Gastrocnemius medialis (tissue), 4 donors: ENCODE measurements at regions of chr16 and their contacts with region 1.

Region 1: DNA sequence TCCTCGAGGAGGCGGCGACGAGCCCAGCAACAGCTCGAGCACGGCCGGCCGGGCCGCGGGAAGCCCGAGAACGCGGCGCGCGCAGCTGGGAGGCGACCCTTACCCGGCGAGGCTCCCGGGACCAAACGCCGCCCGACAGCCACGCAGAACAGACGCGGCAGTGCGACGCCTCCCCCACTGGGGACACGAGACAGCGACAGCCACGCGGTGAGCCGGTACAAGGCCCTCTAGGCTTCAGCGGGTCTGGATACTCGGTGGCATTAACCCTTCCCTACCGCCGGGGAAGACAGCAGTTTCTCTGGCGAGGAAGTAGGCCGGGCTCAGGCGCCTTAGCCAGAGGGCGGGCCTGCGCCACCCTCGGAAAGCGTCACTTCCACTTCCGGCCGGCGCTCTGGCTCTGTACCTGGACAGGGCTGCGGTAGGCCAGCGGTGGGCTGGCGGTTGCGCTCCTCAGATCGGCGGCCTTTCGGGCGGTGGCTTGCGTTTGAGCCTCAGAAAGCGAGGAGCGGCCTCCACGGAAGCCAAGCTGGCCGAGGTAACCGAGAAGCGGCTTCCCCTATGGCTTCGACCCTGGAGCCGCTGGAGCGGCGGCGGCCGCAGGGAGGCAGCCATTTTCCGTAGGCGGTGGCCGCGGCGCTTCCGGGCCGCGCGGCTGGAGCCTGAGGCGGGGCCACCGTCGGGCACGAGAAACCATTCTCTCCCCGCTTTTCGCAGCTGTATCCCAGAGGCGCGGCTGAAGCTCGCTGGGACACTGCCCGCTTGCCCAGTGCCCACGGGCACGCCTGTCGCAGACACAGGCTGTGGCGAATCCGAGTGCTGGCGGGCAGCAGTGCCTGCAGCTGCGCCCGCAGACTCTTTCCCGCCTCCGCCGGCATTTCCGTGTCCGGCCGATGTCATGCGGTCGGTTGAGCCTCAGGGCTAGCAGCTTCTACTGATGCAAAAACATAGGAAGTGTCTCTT is at the starts of genes TIGD7 and ZNF75A:
- DNase-seq: peak; percentile 78
- ATAC-seq: peak; percentile 97 to 98
- H3K4me3 ChIP-seq: peak within 1 kb of the TSS; percentile 75 to 83 (median 76)
- H3K27ac ChIP-seq: peak within 1 kb of the TSS; percentile 89 to 94 (median 92)
- H3K4me1 ChIP-seq: peaks cover 13 to 16% of the 10 kb centered on the region in 2 donors
- H3K27me3 ChIP-seq: no peaks in the 10 kb centered on the region
- CTCF ChIP-seq: peak in 4 of 5 experiments; percentile 20 to 35 (median 27)
- POLR2A ChIP-seq: peak; percentile 88 to 93
- total RNA-seq, gene TIGD7: 2.5 to 8.1 (median 4.4) TPM
- total RNA-seq, gene ZNF75A: 5.5 to 13.2 (median 12.5) TPM

Region 2: DNA sequence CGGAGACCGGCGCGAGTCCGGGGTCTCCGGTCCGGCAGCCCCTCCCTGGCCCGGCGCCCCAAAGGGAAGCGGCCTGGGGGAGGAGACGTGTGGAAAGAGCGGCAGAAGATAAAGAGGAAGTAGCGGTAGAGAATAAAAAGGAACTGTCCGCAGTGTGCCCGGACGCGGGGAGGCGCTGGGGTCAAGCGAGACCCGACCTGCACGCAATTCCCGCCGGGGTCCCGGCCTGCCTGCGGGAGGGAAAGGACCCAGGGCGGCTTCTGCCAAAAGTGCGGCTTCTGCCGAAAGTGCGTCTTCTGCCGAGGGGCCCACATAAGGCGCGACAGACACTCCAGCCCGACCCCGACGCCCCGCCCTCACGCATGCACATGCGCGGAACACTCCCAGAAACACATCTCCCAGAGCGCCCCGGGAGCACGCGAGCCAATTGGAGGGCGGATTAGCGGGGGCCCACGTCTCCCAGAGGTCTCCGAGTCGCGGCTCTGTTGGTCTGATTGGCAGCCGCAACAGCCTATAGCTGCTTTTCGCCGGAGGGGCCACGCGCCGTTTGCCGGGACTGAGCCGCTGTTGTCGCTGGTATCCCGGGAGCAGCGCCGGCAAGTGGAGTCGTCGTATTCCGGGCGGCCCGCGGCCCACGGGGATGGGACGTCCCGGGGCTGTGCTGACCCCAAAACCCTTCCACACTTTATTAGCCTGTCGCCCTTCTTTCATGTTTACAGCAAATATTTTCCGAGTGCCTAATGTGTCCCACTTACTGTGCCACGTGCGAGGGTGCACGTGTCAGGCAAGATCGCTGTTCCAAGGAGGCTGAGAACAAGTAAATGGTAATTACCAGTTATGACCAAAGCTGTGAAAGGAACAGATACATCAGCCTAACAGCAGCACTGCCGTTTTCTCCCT is 41.0 kb before region 1 on chr16:
- in situ Hi-C with region 1: no loop called
- intact Hi-C with region 1: loop called (anchors 1 kb)
- DNase-seq: peak; percentile 93 to 95
- ATAC-seq: peak; percentile 91 to 93
- H3K4me3 ChIP-seq: peak overlapping the region; percentile 65 to 94 (median 78)
- H3K27ac ChIP-seq: peak overlapping the region; percentile 92 to 99 (median 94)
- H3K4me1 ChIP-seq: peaks cover 0 to 5% of the 10 kb centered on the region in 2 donors
- H3K27me3 ChIP-seq: no peaks in the 10 kb centered on the region
- CTCF ChIP-seq: peak in 4 of 5 experiments; percentile 23 to 42 (median 34)
- POLR2A ChIP-seq: peak; percentile 86 to 90

Region 3: GRCh38 chr16:3503523-3503922 is 198.1 kb after region 1 on chr16:
- in situ Hi-C with region 1: no loop called
- intact Hi-C with region 1: loop called (anchors 1 kb)
- DNase-seq: no peak
- ATAC-seq: no peak
- H3K4me3 ChIP-seq: no peak overlapping the region
- H3K27ac ChIP-seq: no peak overlapping the region
- H3K4me1 ChIP-seq: peaks cover 6 to 15% of the 10 kb centered on the region in 2 donors
- H3K27me3 ChIP-seq: no peaks in the 10 kb centered on the region
- CTCF ChIP-seq: no peak
- POLR2A ChIP-seq: no peak